Dendritic cell treated with granulocyte-macrophage colony-stimulating factor and Interleukin-4, amounts not matched to agents 40 ng/mL and 50 ng/mL, for 4 days (primary cell): ENCODE measurements at regions of chr6 and their contacts with region 1.

Region 1: GRCh38 chr6:37005061-37005810 is at the start of gene FGD2:
- H3K4me3 Mint-ChIP-seq: peak within 1 kb of the TSS; percentile 100
- H3K27ac Mint-ChIP-seq: peak within 1 kb of the TSS; percentile 86
- H3K4me1 Mint-ChIP-seq: peaks cover 62% of the 10 kb centered on the region
- H3K27me3 Mint-ChIP-seq: no peaks in the 10 kb centered on the region

Region 2: GRCh38 chr6:36735110-36736071 is 269.8 kb before region 1 on chr6:
- intact Hi-C with region 1: no loop called
- H3K4me3 Mint-ChIP-seq: peak overlapping the region; percentile 30
- H3K27ac Mint-ChIP-seq: peak overlapping the region; percentile 66
- H3K4me1 Mint-ChIP-seq: peaks cover 22% of the 10 kb centered on the region
- H3K27me3 Mint-ChIP-seq: peaks cover 18% of the 10 kb centered on the region

Region 3: DNA sequence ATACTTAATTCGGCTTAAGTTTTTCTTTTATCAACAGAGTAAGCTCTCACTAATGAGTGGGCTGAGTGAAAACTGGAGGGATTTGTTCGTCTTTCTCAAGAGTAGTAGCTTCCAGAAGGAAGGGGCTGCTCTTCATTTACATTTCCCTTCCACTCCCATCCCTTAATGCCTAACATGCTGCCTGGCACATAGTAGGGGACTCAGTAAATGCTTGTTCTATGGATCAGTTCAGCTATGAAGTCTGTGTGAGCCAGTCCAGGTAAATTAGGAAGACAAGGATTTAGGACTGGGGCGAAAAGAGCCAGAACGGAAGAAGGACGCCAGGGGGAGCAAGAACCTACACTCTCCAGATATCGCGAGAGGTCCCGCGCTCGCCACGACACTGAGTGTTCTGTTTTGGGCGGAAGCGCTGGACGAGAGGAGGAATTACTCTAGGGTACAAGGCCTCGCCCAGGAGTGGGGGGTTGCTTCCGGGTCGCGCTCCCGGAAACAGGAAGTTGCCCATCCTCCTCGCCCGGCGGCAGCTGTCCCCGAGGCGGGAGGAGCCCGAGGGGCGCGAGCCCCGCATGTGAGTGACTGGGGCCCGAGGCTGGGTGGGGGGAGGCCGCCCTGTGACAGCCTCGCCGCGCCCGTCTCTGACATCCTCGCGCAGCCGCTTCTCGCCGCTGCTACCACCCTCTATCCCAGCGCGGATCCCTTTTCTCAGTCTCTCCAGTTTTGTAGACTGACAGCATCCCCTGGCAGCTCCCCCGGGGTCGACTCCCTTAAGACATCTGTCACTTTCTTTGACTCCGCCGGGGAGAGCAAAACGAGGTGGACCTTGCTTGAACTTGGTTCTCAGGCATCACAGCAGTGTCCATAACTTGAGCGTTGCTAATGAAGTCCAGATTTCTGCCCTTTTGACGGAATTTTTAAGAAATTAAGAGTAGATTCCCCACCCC is 119.5 kb before region 1 on chr6 and contains the start of gene C6orf89:
- intact Hi-C with region 1: loop called (anchors 5 kb)
- H3K4me3 Mint-ChIP-seq: peak within 1 kb of the TSS; percentile 83
- H3K27ac Mint-ChIP-seq: peak within 1 kb of the TSS; percentile 83
- H3K4me1 Mint-ChIP-seq: peaks cover 28% of the 10 kb centered on the region
- H3K27me3 Mint-ChIP-seq: no peaks in the 10 kb centered on the region

Region 4: GRCh38 chr6:36985808-36986703 is 19.2 kb before region 1 on chr6 and contains the start of gene MTCH1:
- intact Hi-C with region 1: loop called (anchors 1 kb)
- H3K4me3 Mint-ChIP-seq: no peak within 1 kb of the TSS
- H3K27ac Mint-ChIP-seq: no peak within 1 kb of the TSS
- H3K4me1 Mint-ChIP-seq: peaks cover 35% of the 10 kb centered on the region
- H3K27me3 Mint-ChIP-seq: peaks cover 2% of the 10 kb centered on the region

Region 5: DNA sequence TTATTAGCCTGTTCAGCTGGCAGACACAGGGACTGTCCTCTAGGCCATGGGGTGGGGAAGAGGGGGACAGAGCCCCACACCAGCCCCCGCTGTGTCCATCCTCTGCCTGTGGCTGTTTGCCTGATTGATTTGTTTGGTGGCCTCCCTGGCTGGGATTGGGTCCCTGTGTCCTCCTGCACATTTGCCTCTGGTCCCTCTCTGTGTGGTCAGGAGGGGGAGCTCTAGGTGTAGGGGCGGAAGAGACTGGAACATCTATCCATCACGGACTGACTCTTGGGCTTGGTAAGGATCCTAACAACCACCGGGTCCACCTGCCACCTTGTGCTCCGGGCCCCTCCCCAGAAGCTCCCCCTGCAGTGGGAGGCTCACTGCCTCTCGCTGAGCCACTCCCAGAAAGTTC is 532.9 kb after region 1 on chr6:
- intact Hi-C with region 1: no loop called
- H3K4me3 Mint-ChIP-seq: no peak overlapping the region
- H3K27ac Mint-ChIP-seq: no peak overlapping the region
- H3K4me1 Mint-ChIP-seq: no peaks in the 10 kb centered on the region
- H3K27me3 Mint-ChIP-seq: peaks cover 68% of the 10 kb centered on the region